ENCODE measurements at regions of chr12 and their contacts with region 1.

Region 1: GRCh38 chr12:59444932-59445331 is 150.9 kb upstream of the SLC16A7 start:
- DNase-seq: no peak
- ATAC-seq: no peak

Region 2: GRCh38 chr12:59834659-59835474 is 389.9 kb after region 1 on chr12:
- intact Hi-C with region 1: loop called in 1 of 2 experiments (anchors 10 kb)
- DNase-seq: no peak
- ATAC-seq: peak in 1 of 2 donors; percentile 38

Measured in left cardiac atrium (tissue), 4 donors.